MCF 10A (cell line): ENCODE measurements at regions of chr1 and their contacts with region 1.

Region 1: GRCh38 chr1:15272009-15272788 is 25.2 kb downstream of the FHAD1 start:
- DNase-seq: peak; percentile 89
- H3K4me3 Mint-ChIP-seq: no peak overlapping the region
- H3K27ac Mint-ChIP-seq: no peak overlapping the region
- H3K4me1 Mint-ChIP-seq: peaks cover 7% of the 10 kb centered on the region
- H3K27me3 Mint-ChIP-seq: peaks cover 12% of the 10 kb centered on the region
- CTCF ChIP-seq: peak; percentile 75

Region 2: GRCh38 chr1:15128520-15129313 is 143.5 kb before region 1 on chr1:
- CTCF ChIA-PET with region 1: interaction called, 58 read pairs
- POLR2A ChIA-PET with region 1: no interaction called
- intact Hi-C with region 1: loop called (anchors 1 kb)
- DNase-seq: peak; percentile 74
- H3K4me3 Mint-ChIP-seq: no peak overlapping the region
- H3K27ac Mint-ChIP-seq: no peak overlapping the region
- H3K4me1 Mint-ChIP-seq: no peaks in the 10 kb centered on the region
- H3K27me3 Mint-ChIP-seq: peaks cover 1% of the 10 kb centered on the region
- CTCF ChIP-seq: peak; percentile 86

Region 3: GRCh38 chr1:15254559-15254958 is 17.6 kb before region 1 on chr1:
- CTCF ChIA-PET with region 1: interaction called, 12 read pairs
- POLR2A ChIA-PET with region 1: no interaction called
- intact Hi-C with region 1: no loop called
- DNase-seq: no peak
- H3K4me3 Mint-ChIP-seq: no peak overlapping the region
- H3K27ac Mint-ChIP-seq: no peak overlapping the region
- H3K4me1 Mint-ChIP-seq: no peaks in the 10 kb centered on the region
- H3K27me3 Mint-ChIP-seq: peaks cover 38% of the 10 kb centered on the region
- CTCF ChIP-seq: no peak

Region 4: GRCh38 chr1:15283526-15283925 is 11.3 kb after region 1 on chr1:
- CTCF ChIA-PET with region 1: interaction called, 24 read pairs
- POLR2A ChIA-PET with region 1: interaction called, 4 read pairs
- intact Hi-C with region 1: no loop called
- DNase-seq: peak; percentile 87
- H3K4me3 Mint-ChIP-seq: no peak overlapping the region
- H3K27ac Mint-ChIP-seq: no peak overlapping the region
- H3K4me1 Mint-ChIP-seq: peaks cover 21% of the 10 kb centered on the region
- H3K27me3 Mint-ChIP-seq: no peaks in the 10 kb centered on the region
- CTCF ChIP-seq: peak; percentile 35

Region 5: GRCh38 chr1:15304701-15305467 is 32.7 kb after region 1 on chr1:
- CTCF ChIA-PET with region 1: interaction called, 5 read pairs
- POLR2A ChIA-PET with region 1: no interaction called
- intact Hi-C with region 1: loop called (anchors 1 kb)
- DNase-seq: peak; percentile 69
- H3K4me3 Mint-ChIP-seq: no peak overlapping the region
- H3K27ac Mint-ChIP-seq: no peak overlapping the region
- H3K4me1 Mint-ChIP-seq: no peaks in the 10 kb centered on the region
- H3K27me3 Mint-ChIP-seq: no peaks in the 10 kb centered on the region
- CTCF ChIP-seq: peak; percentile 84